A549 (cell line): ENCODE measurements at regions of chr19 and their contacts with region 1.

Region 1: DNA sequence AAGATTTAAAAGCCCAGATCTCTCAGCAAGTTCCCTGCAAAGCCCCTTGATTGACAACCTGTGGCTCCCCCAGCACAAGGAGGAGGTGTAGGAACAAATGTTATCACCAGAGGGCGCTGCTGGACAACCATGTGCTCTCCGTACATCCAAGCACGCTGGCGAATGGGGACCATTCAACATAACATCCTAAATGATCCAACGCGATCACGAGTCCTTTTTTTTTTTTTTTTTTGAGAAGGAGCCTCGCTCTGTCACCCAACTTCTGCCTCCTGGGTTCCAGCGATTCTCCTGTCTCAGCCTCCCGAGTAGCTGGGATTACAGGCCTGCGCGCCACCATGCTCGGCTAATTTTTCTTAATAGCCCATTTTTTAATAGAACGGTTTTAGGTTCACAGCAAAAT is 52.0 kb downstream of the NWD1 start:
- DNase-seq: peak; percentile 66 to 76
- ATAC-seq: peak; percentile 88 to 93; a peak in 5 of 6 replicates
- H3K4me3 ChIP-seq: no peak overlapping the region
- H3K27ac ChIP-seq: no peak overlapping the region
- H3K4me1 ChIP-seq: no peaks in the 10 kb centered on the region
- CTCF ChIP-seq: peak; percentile 62
- EP300 ChIP-seq: no peak
- POLR2A ChIP-seq: no peak
- RAD21 ChIP-seq: peak; percentile 73 to 82

Region 2: DNA sequence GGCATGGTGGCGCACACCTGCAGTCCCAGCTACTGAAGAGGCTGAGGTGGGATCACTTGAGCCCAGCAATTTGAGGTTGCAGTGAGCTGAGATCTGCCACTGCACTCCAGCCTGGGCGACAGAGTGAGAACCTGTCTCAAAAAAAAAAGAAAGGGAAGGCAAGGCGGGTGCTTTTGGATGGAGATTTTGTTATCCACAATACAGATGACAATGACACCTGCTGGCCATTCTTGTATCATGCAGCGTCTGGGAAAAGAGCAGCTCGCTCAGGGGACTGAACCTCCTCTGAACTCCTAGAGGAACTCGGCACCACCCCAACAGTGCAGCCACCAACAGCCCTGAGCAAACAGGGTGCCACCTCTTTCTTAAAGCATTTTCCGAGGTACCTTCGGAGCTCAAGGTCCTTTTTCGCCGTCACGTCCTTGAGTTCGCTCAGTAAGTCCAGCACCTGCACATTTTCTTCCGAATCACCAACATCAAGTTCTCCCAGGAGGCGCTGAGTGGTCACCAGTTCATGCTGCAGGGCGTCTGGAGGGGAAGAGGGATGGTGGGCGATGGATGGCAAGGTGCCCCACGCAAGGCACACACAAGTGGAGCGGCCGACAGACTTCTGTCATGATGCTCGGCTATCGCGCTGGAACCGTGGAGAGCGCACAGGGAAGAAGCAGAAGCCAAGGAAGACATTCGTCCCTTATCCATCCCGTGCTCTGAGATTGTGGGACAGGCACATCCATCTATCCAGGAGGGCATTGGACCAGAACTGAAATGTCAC is 281.0 kb after region 1 on chr19:
- CTCF ChIA-PET with region 1: interaction called, 41 read pairs
- POLR2A ChIA-PET with region 1: interaction called, 3 read pairs
- DNase-seq: peak in 1 of 2 experiments; percentile 42
- ATAC-seq: peak; percentile 67 to 71
- H3K4me3 ChIP-seq: no peak overlapping the region
- H3K27ac ChIP-seq: no peak overlapping the region
- H3K4me1 ChIP-seq: no peaks in the 10 kb centered on the region
- CTCF ChIP-seq: peak; percentile 52
- EP300 ChIP-seq: no peak
- POLR2A ChIP-seq: no peak
- RAD21 ChIP-seq: peak; percentile 57 to 63